ENCODE measurements at regions of chr1 and their contacts with region 1.

Region 1: GRCh38 chr1:72178266-72178665 is 104.1 kb downstream of the NEGR1 start:
- DNase-seq: no peak
- H3K4me3 Mint-ChIP-seq: no peak overlapping the region
- H3K27ac Mint-ChIP-seq: no peak overlapping the region
- H3K4me1 Mint-ChIP-seq: no peaks in the 10 kb centered on the region
- H3K27me3 Mint-ChIP-seq: no peaks in the 10 kb centered on the region
- CTCF ChIP-seq: no peak

Region 2: GRCh38 chr1:72141875-72142274 is 36.4 kb before region 1 on chr1:
- CTCF ChIA-PET with region 1: no interaction called
- intact Hi-C with region 1: loop called (anchors 1 kb)
- DNase-seq: no peak
- H3K4me3 Mint-ChIP-seq: no peak overlapping the region
- H3K27ac Mint-ChIP-seq: no peak overlapping the region
- H3K4me1 Mint-ChIP-seq: peaks cover 7% of the 10 kb centered on the region
- H3K27me3 Mint-ChIP-seq: no peaks in the 10 kb centered on the region
- CTCF ChIP-seq: no peak